HCT116 (cell line): ENCODE measurements at regions of chr16 and their contacts with region 1.

Region 1: GRCh38 chr16:75519881-75520280 is 16.0 kb downstream of the CHST5 start:
- DNase-seq: no peak
- ATAC-seq: no peak
- H3K4me3 ChIP-seq: no peak overlapping the region
- H3K27ac ChIP-seq: no peak overlapping the region
- H3K4me1 ChIP-seq: peaks cover 9 to 14% of the 10 kb centered on the region in 2 experiments
- H3K27me3 ChIP-seq: no peaks in the 10 kb centered on the region
- CTCF ChIP-seq: no peak
- POLR2A ChIP-seq: no peak
- RAD21 ChIP-seq: no peak

Region 2: DNA sequence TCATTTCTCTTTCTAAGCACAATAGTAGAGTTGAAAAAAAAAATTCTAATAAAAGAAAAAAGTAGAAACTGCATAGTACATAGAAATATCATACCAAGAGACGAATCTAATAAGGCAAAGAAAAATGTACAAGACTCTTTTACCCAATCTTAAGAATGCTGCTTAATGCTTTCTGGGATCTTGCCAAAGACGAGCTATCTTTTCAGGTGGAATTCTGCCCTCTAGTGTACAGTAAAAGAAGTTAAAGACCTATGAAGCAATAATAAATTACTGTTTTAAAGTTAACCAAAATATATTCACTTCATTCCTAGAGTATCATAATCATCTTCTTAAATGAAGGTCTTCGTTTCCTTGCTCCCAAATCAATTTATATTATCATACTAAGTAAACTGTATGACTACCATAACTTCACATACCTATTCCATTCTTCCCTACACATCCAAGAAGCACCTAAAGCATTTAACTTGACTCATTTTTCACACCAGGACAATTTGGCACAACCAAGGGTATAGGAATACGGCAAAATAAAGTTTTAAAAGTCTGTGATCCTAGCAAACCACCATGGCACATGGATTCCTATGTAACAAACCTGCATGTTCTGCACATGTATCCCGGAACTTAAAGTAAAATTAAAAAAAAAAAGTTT is 134.3 kb before region 1 on chr16:
- CTCF ChIA-PET with region 1: no interaction called
- POLR2A ChIA-PET with region 1: no interaction called
- RAD21 ChIA-PET with region 1: no interaction called
- intact Hi-C with region 1: no loop called
- DNase-seq: peak; percentile 66
- ATAC-seq: no peak; the same call in 1 of the 2 replicates
- H3K4me3 ChIP-seq: no peak overlapping the region
- H3K27ac ChIP-seq: no peak overlapping the region
- H3K4me1 ChIP-seq: peaks cover 3 to 4% of the 10 kb centered on the region in 2 experiments; a peak in 1 of 4 replicates
- H3K27me3 ChIP-seq: no peaks in the 10 kb centered on the region
- CTCF ChIP-seq: peak; percentile 30 to 91 (median 74); a peak in 5 of 6 replicates
- POLR2A ChIP-seq: no peak
- RAD21 ChIP-seq: peak; percentile 97

Region 3: GRCh38 chr16:75486676-75487313 is 33.1 kb before region 1 on chr16:
- CTCF ChIA-PET with region 1: interaction called, 23 read pairs
- POLR2A ChIA-PET with region 1: no interaction called
- RAD21 ChIA-PET with region 1: interaction called, 3 to 5 read pairs
- intact Hi-C with region 1: loop called (anchors 1 kb)
- DNase-seq: no peak
- ATAC-seq: no peak
- H3K4me3 ChIP-seq: no peak overlapping the region
- H3K27ac ChIP-seq: peak overlapping the region; percentile 99; the same call in 1 of the 2 replicates
- H3K4me1 ChIP-seq: peaks cover 48 to 63% of the 10 kb centered on the region in 2 experiments
- H3K27me3 ChIP-seq: no peaks in the 10 kb centered on the region
- CTCF ChIP-seq: no peak
- POLR2A ChIP-seq: no peak
- RAD21 ChIP-seq: no peak

Region 4: DNA sequence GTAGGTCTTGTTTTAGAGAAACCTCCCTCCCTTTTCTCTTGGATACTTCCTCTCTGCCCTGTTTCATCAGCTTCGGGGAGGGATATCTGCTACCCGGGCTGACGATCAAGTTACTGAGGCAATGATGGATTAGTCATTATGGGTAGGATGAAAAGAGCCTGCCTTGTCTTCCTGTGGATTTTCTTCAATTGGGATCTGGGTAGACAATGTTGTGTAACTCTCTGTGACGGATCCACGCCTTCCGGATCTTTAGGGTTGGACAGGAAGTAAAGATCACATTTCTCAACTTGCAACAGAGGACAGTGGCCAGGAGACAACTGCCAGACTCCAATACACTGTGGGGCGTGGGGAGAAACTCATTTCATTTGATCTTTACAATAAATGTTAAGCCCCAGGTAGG is 13.3 kb before region 1 on chr16:
- CTCF ChIA-PET with region 1: interaction called, 16 read pairs
- POLR2A ChIA-PET with region 1: interaction called, 10 read pairs
- RAD21 ChIA-PET with region 1: no interaction called
- intact Hi-C with region 1: no loop called
- DNase-seq: peak; percentile 73
- ATAC-seq: peak; percentile 37
- H3K4me3 ChIP-seq: no peak overlapping the region; a peak in 1 of 4 replicates
- H3K27ac ChIP-seq: peak overlapping the region; percentile 13; the same call in 1 of the 2 replicates
- H3K4me1 ChIP-seq: peaks cover 24 to 37% of the 10 kb centered on the region in 2 experiments
- H3K27me3 ChIP-seq: no peaks in the 10 kb centered on the region
- CTCF ChIP-seq: no peak
- POLR2A ChIP-seq: no peak
- RAD21 ChIP-seq: no peak; the same call in 1 of the 2 replicates

Region 5: GRCh38 chr16:75550211-75550662 is 30.4 kb after region 1 on chr16:
- CTCF ChIA-PET with region 1: interaction called, 12 read pairs
- POLR2A ChIA-PET with region 1: no interaction called
- RAD21 ChIA-PET with region 1: interaction called in 1 of 2 experiments, 3 read pairs
- intact Hi-C with region 1: loop called (anchors 1 kb)
- DNase-seq: no peak
- ATAC-seq: peak; percentile 38
- H3K4me3 ChIP-seq: no peak overlapping the region
- H3K27ac ChIP-seq: no peak overlapping the region
- H3K4me1 ChIP-seq: peaks cover 2 to 11% of the 10 kb centered on the region in 2 experiments; a peak in 2 of 4 replicates
- H3K27me3 ChIP-seq: no peaks in the 10 kb centered on the region
- CTCF ChIP-seq: peak; percentile 55 to 65 (median 58); a peak in 5 of 6 replicates
- POLR2A ChIP-seq: no peak
- RAD21 ChIP-seq: peak; percentile 73

Region 6: DNA sequence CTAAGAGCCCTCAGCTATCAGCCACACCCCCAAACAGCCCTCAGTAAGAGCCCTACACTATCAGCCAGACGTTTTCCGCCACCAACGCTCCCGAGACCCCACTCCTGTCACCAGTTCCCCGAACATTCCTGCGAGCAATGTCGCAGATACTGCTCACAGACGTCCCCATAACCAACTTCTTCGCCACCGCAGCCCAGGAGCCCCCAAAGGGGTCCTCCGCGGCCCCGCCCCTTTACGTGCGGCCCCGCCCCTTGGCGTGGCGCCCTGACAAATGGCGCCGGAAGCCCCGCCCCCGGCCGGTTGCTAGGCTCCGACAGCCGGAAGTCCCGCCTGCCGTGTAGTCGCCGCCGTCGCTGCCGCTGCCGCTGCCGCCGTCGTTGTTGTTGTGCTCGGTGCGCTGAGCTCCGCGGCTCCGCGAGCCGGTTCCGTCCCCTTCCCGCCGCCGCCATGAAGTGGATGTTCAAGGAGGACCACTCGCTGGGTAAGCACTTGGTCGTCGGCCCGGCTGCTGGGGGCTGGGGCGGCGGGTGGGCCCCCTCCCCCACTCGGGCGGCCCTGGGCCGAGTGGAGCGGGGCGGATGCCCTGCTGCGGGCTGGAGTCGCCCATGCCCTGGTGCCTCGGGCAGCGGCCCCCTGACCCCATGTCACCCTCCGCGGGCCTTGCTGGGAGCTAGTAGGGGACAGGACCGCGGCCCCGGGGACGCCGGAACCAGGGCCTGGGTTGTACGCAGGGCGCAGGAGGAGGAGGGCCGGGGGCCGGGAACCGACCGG is 46.3 kb after region 1 on chr16 and contains the start of gene GABARAPL2:
- CTCF ChIA-PET with region 1: interaction called, 10 read pairs
- POLR2A ChIA-PET with region 1: no interaction called
- RAD21 ChIA-PET with region 1: no interaction called
- intact Hi-C with region 1: no loop called
- DNase-seq: peak; percentile 50
- ATAC-seq: peak; percentile 80
- H3K4me3 ChIP-seq: peak within 1 kb of the TSS; percentile 90
- H3K27ac ChIP-seq: peak within 1 kb of the TSS; percentile 68; the same call in 1 of the 2 replicates
- H3K4me1 ChIP-seq: peaks cover 15 to 24% of the 10 kb centered on the region in 2 experiments
- H3K27me3 ChIP-seq: no peaks in the 10 kb centered on the region
- CTCF ChIP-seq: no peak
- POLR2A ChIP-seq: no peak
- RAD21 ChIP-seq: no peak
- total RNA-seq, gene GABARAPL2: 76.9 TPM